OCI-LY7 (cell line): ENCODE measurements at regions of chr6 and their contacts with region 1.

Region 1: GRCh38 chr6:159252955-159253508 is 83.8 kb downstream of the FNDC1 start:
- DNase-seq: peak; percentile 68
- H3K4me3 ChIP-seq: no peak overlapping the region
- H3K27ac ChIP-seq: no peak overlapping the region
- H3K4me1 ChIP-seq: peaks cover 4% of the 10 kb centered on the region
- CTCF ChIP-seq: peak; percentile 85

Region 2: DNA sequence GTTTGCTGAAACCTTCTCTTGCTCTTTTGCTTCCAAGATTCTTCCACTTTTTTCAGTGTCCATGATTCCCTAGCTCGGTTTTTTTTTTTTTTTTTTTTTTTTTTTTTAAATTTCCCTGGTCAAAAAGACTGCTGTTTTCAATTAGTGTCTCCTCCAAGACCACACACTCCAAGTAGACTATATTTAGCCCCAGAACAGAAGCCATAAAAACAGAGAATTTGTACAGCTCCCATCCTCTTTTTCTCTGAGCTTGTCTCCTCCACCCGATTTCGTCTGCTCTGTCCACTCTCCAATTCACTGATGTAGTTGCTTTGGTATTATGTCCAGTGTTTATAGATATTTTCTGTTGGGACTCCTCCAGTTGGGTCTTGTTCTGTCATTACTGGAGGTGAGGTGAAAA is 290.7 kb before region 1 on chr6:
- CTCF ChIA-PET with region 1: no interaction called
- POLR2A ChIA-PET with region 1: no interaction called
- intact Hi-C with region 1: no loop called
- DNase-seq: no peak
- H3K4me3 ChIP-seq: no peak overlapping the region
- H3K27ac ChIP-seq: no peak overlapping the region
- H3K4me1 ChIP-seq: peaks cover 19% of the 10 kb centered on the region
- CTCF ChIP-seq: no peak

Region 3: GRCh38 chr6:159233365-159234101 is 19.5 kb before region 1 on chr6:
- CTCF ChIA-PET with region 1: no interaction called
- POLR2A ChIA-PET with region 1: interaction called, 12 read pairs
- intact Hi-C with region 1: no loop called
- DNase-seq: no peak
- H3K4me3 ChIP-seq: no peak overlapping the region
- H3K27ac ChIP-seq: no peak overlapping the region
- H3K4me1 ChIP-seq: no peaks in the 10 kb centered on the region
- CTCF ChIP-seq: no peak

Region 4: DNA sequence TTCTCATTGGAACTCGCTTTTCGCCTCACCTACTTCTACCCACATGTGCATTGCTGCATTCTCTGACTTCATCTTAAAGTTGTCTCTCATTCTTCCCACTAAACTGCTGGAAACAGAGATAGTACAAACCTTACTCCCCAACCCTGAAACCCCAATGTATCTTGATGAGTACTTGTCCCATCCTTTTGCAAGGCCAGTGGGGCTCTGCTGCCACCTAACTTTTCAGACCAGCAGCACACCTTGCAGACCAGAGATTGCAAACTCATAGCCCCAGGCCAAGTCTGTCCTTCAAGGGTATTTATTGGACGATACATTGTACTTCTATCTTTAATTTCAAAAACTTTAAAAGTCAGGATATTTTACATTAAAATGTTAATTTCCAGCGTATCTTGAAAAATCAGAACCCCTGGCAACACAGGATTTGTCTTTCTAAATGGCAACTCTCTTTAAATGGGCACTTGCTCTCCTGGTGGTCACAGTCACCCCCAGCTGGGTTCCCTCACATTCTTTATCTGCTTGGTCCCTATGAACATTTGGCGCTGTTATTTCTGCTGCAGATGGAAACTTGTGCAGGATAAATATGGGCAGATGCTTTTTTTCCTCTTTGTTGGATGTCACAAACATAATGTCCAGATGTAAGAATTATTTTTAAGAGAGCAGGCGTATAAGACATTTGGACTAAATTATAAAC is 356.1 kb after region 1 on chr6:
- CTCF ChIA-PET with region 1: no interaction called
- POLR2A ChIA-PET with region 1: interaction called, 5 read pairs
- intact Hi-C with region 1: loop called (anchors 2 kb)
- DNase-seq: peak; percentile 66
- H3K4me3 ChIP-seq: no peak overlapping the region
- H3K27ac ChIP-seq: no peak overlapping the region
- H3K4me1 ChIP-seq: no peaks in the 10 kb centered on the region
- CTCF ChIP-seq: peak; percentile 93

Region 5: GRCh38 chr6:159654483-159655098 is 401.6 kb after region 1 on chr6:
- CTCF ChIA-PET with region 1: interaction called, 3 read pairs
- POLR2A ChIA-PET with region 1: no interaction called
- intact Hi-C with region 1: loop called (anchors 10 kb)
- DNase-seq: peak; percentile 86
- H3K4me3 ChIP-seq: no peak overlapping the region
- H3K27ac ChIP-seq: no peak overlapping the region
- H3K4me1 ChIP-seq: no peaks in the 10 kb centered on the region
- CTCF ChIP-seq: peak; percentile 93